Activated CD4-positive, alpha-beta memory T cell treated with anti-CD3 and anti-CD28 coated beads for 36 hours (primary cell): ENCODE measurements at regions of chr3 and their contacts with region 1.

Region 1: GRCh38 chr3:57755668-57756527 is at the start of gene SLMAP:
- DNase-seq: peak; percentile 98
- H3K4me3 Mint-ChIP-seq: peak within 1 kb of the TSS; percentile 97
- H3K27ac Mint-ChIP-seq: peak within 1 kb of the TSS; percentile 98
- H3K4me1 Mint-ChIP-seq: peaks cover 36% of the 10 kb centered on the region
- H3K27me3 Mint-ChIP-seq: no peaks in the 10 kb centered on the region
- total RNA-seq, gene SLMAP: 42.5 to 43.9 TPM

Region 2: GRCh38 chr3:57227204-57227929 is 528.5 kb before region 1 on chr3 and contains the start of gene APPL1:
- CTCF ChIA-PET with region 1: no interaction called
- POLR2A ChIA-PET with region 1: no interaction called
- intact Hi-C with region 1: loop called (anchors 2 kb)
- DNase-seq: peak; percentile 94
- H3K4me3 Mint-ChIP-seq: peak within 1 kb of the TSS; percentile 89
- H3K27ac Mint-ChIP-seq: peak within 1 kb of the TSS; percentile 75
- H3K4me1 Mint-ChIP-seq: peaks cover 28% of the 10 kb centered on the region
- H3K27me3 Mint-ChIP-seq: no peaks in the 10 kb centered on the region
- total RNA-seq, gene APPL1: 34.7 to 34.9 TPM

Region 3: DNA sequence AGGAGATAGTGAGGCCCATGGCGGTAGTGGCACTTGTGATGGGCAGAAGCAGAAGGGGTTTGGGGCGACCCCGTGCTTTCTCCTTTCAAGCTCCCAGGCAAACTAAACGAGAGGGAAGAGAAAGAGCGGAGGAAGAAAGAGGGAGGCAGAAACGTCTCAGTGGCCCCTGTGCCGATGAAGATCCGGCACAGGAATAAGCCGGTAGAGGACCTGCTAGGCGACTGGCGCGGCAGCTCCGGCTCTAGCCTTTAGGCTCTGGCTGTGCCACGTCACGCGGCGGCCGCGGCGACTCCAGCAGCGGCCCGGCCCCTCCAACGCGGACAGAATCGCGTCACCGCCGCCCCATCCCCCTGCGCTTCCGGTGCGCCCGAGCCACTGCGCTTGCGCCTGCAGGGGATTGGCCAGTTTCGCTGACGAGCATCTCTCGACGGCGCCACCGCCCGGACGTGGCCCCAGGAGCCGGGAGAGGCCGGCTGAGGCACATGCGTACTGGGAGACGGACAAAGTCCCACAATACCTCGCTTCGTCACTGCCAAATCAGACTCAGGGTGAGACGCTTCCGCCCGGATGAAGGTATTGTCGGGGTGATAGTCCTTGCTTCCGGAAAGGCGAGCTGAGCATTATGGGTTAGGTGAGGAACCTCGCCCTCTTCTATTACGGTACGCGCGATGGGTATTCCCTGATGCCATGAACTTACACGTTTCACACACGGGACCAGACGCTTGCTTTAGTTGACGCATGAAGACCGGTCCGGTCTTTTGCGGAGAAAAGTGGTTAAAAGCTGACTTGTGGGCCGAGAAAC is 158.6 kb before region 1 on chr3 and contains the start of gene ARF4:
- CTCF ChIA-PET with region 1: interaction called, 3 read pairs
- POLR2A ChIA-PET with region 1: interaction called, 13 read pairs
- intact Hi-C with region 1: loop called (anchors 1 kb)
- DNase-seq: peak; percentile 100
- H3K4me3 Mint-ChIP-seq: peak within 1 kb of the TSS; percentile 97
- H3K27ac Mint-ChIP-seq: peak within 1 kb of the TSS; percentile 99
- H3K4me1 Mint-ChIP-seq: peaks cover 41% of the 10 kb centered on the region
- H3K27me3 Mint-ChIP-seq: no peaks in the 10 kb centered on the region
- total RNA-seq, gene ARF4: 66.6 to 68.8 TPM

Region 4: GRCh38 chr3:57803647-57804081 is 47.8 kb after region 1 on chr3:
- CTCF ChIA-PET with region 1: no interaction called
- POLR2A ChIA-PET with region 1: no interaction called
- intact Hi-C with region 1: loop called (anchors 1 kb)
- DNase-seq: no peak
- H3K4me3 Mint-ChIP-seq: peak overlapping the region; percentile 10
- H3K27ac Mint-ChIP-seq: peak overlapping the region; percentile 74
- H3K4me1 Mint-ChIP-seq: peaks cover 60% of the 10 kb centered on the region
- H3K27me3 Mint-ChIP-seq: no peaks in the 10 kb centered on the region

Region 5: GRCh38 chr3:57983734-57984518 is 228.0 kb after region 1 on chr3:
- CTCF ChIA-PET with region 1: no interaction called
- POLR2A ChIA-PET with region 1: no interaction called
- intact Hi-C with region 1: loop called (anchors 10 kb)
- DNase-seq: peak; percentile 81
- H3K4me3 Mint-ChIP-seq: no peak overlapping the region
- H3K27ac Mint-ChIP-seq: peak overlapping the region; percentile 81
- H3K4me1 Mint-ChIP-seq: peaks cover 20% of the 10 kb centered on the region
- H3K27me3 Mint-ChIP-seq: no peaks in the 10 kb centered on the region